ENCODE measurements at regions of chr7 and their contacts with region 1.

Region 1: GRCh38 chr7:5636914-5637313 is 144.5 kb downstream of the RNF216 start:
- DNase-seq: peak; percentile 52 to 54
- ATAC-seq: peak; percentile 56 to 85 (median 66)
- H3K4me3 ChIP-seq: peak overlapping the region in 1 of 10 donors; percentile 8
- H3K27ac ChIP-seq: peak overlapping the region in 8 of 10 donors; percentile 29 to 74 (median 58)
- H3K4me1 ChIP-seq: peaks cover 17 to 58% (median 52%) of the 10 kb centered on the region in 9 donors
- H3K27me3 ChIP-seq: no peaks in the 10 kb centered on the region
- CTCF ChIP-seq: no peak

Region 2: DNA sequence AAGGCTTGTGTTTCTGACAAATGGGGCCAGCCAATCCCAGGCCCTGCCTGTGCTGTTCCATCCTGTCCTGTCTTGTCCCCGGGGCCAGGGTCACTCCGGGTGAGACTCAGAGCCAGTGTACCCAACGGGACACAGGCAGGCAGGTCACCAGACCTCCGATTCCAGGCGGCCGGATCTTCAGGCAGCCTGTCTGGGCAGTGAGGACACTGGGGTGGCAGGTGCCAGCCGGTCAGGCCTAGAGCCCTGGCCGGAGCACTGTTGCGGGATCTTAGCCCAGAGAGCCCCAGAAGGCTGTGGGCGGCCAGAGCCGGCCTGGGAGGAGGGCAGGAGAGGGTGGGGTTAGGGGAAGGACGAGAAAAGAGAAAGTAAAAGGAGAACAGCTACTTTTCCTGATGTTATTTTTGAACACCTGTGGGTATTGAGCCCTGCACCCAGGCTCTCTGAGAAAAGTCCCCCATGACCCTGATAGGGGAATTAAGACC is 79.0 kb before region 1 on chr7:
- intact Hi-C with region 1: no loop called
- DNase-seq: peak; percentile 65 to 76
- ATAC-seq: peak; percentile 13 to 57 (median 42)
- H3K4me3 ChIP-seq: peak overlapping the region in 7 of 10 donors; percentile 21 to 72 (median 31)
- H3K27ac ChIP-seq: peak overlapping the region; percentile 90 to 100 (median 100)
- H3K4me1 ChIP-seq: peaks cover 30 to 69% (median 61%) of the 10 kb centered on the region in 9 donors
- H3K27me3 ChIP-seq: no peaks in the 10 kb centered on the region
- CTCF ChIP-seq: no peak

Region 3: DNA sequence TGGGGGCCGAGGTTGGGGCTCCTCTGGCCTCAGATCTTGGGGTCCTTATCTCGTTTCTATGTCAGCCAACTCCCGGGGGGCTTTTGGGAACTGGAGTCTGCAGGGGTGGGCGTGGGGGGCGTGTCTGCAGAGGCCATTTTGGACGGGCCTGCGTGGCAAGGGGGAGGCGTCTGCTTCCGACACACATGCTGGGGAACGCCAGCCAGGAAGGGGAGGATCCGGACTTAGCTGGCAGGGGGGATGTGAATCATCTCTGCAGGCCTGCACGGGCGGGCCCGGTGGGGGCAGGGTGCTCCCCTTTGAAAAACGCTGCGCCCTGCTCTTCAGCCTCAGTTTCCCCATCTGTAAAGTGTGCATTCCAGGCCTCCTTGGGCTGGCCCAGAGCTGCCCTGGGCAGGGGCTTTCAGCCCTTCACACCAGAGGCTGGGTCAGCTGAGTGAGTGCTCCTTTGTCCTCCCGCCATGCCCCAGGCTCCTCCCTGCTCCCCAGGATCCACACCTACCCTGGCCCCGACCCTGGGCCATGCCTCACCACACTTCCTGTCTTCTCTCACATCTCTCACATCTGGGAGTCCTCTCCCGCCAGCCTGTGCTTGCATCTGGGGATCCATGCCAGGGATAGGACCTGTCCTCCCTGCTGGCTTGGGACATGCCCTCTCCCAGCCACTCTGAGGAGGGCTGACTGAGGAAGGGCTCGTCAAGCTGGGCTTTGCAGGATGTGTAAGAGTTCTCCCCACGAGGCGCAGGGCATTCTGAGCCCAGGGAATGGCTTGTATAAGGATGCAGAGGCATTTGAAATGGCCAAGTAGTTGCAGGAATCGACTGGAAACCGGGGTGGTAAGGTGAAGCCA is 40.6 kb before region 1 on chr7:
- intact Hi-C with region 1: loop called in 3 of 10 experiments (anchors 2 to 5 kb)
- DNase-seq: peak; percentile 78 to 82
- ATAC-seq: peak; percentile 30 to 77 (median 63)
- H3K4me3 ChIP-seq: peak overlapping the region in 7 of 10 donors; percentile 68 to 75 (median 72)
- H3K27ac ChIP-seq: peak overlapping the region in 7 of 10 donors; percentile 34 to 82 (median 78)
- H3K4me1 ChIP-seq: peaks cover 3 to 80% (median 54%) of the 10 kb centered on the region in 9 donors
- H3K27me3 ChIP-seq: peaks cover 0 to 49% (median 6%) of the 10 kb centered on the region in 7 donors
- CTCF ChIP-seq: no peak

Region 4: GRCh38 chr7:5677538-5678294 is 40.8 kb after region 1 on chr7:
- intact Hi-C with region 1: loop called in 1 of 10 experiments (anchors 1 kb)
- DNase-seq: peak; percentile 63 to 76
- ATAC-seq: peak; percentile 77 to 91 (median 82)
- H3K4me3 ChIP-seq: peak overlapping the region in 1 of 10 donors; percentile 7
- H3K27ac ChIP-seq: peak overlapping the region in 8 of 10 donors; percentile 15 to 64 (median 52)
- H3K4me1 ChIP-seq: peaks cover 14 to 74% (median 63%) of the 10 kb centered on the region in 9 donors
- H3K27me3 ChIP-seq: no peaks in the 10 kb centered on the region
- CTCF ChIP-seq: peak; percentile 59 to 84 (median 77)

Measured in heart right ventricle (tissue), 16 donors.